ENCODE measurements at regions of chr4 and their contacts with region 1.

Region 1: GRCh38 chr4:139295206-139295941 is 5.9 kb upstream of the NAA15 start:
- DNase-seq: peak; percentile 90 to 96 (median 94)
- H3K4me3 ChIP-seq: peak overlapping the region; percentile 84 to 92
- H3K4me3 Mint-ChIP-seq: peak overlapping the region; percentile 86 to 99 (median 94)
- H3K27ac ChIP-seq: peak overlapping the region; percentile 86
- H3K27ac Mint-ChIP-seq: peak overlapping the region; percentile 93 to 99 (median 97)
- H3K4me1 ChIP-seq: peaks cover 40% of the 10 kb centered on the region
- H3K4me1 Mint-ChIP-seq: peaks cover 14 to 38% (median 25%) of the 10 kb centered on the region in 4 donors
- H3K27me3 ChIP-seq: no peaks in the 10 kb centered on the region
- H3K27me3 Mint-ChIP-seq: no peaks in the 10 kb centered on the region

Region 2: DNA sequence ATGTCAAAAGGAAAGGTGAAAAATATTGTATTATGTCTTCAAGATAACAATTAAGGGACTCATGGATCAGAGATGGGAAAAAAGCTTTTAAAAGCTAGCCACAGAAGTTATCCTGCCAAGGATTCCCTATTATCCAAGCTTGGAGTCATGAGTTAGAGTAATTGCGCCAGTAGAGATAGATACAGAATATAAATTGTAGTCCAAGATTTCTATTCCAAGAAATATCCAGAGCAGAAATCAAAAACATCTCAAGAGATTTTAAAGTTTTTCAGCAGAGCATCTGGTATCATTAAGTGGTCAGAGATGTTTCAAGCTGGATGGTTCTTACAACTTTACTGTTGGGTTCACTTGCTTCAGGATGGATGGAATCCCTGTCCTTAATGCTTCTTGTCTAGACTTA is 1949.8 kb before region 1 on chr4:
- CTCF ChIA-PET with region 1: no interaction called
- POLR2A ChIA-PET with region 1: no interaction called
- intact Hi-C with region 1: no loop called
- DNase-seq: no peak
- H3K4me3 ChIP-seq: no peak overlapping the region
- H3K4me3 Mint-ChIP-seq: no peak overlapping the region
- H3K27ac ChIP-seq: no peak overlapping the region
- H3K27ac Mint-ChIP-seq: no peak overlapping the region
- H3K4me1 ChIP-seq: no peaks in the 10 kb centered on the region
- H3K4me1 Mint-ChIP-seq: no peaks in the 10 kb centered on the region
- H3K27me3 ChIP-seq: no peaks in the 10 kb centered on the region
- H3K27me3 Mint-ChIP-seq: no peaks in the 10 kb centered on the region

Region 3: DNA sequence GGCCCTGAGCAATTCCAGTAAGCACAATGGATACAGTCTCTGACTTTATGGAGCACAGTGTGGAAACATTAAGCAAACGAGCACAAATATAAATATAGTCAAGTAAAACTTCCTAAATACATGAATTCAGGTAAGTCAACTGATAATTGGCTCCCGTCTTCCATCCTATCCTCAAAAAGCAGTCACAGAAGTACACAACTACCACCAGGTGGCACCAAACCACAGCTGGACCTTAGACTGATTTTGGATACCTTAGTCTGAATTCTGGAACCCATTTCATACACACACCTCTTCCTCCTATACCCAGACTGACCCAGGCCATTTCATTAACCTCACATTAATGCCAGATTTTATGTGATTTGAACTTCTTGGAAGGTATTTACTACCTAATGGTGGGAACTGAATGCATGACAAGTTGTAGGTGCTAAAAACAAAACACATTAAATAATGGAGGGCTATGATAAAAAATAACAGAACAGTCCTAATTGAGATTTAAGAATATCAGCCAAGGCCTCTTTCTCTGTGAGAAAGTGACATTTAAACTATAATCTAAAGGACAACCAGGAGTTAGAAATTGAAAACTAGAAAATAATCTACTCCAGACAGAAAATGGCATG is 195.9 kb before region 1 on chr4:
- CTCF ChIA-PET with region 1: interaction called, 76 read pairs
- POLR2A ChIA-PET with region 1: interaction called, 6 read pairs
- intact Hi-C with region 1: loop called (anchors 1 kb)
- DNase-seq: peak; percentile 70 to 78 (median 73)
- H3K4me3 ChIP-seq: no peak overlapping the region
- H3K4me3 Mint-ChIP-seq: no peak overlapping the region
- H3K27ac ChIP-seq: no peak overlapping the region
- H3K27ac Mint-ChIP-seq: peak overlapping the region in 1 of 7 donors; percentile 43
- H3K4me1 ChIP-seq: no peaks in the 10 kb centered on the region
- H3K4me1 Mint-ChIP-seq: peaks cover 0 to 6% (median 3%) of the 10 kb centered on the region in 4 donors
- H3K27me3 ChIP-seq: no peaks in the 10 kb centered on the region
- H3K27me3 Mint-ChIP-seq: no peaks in the 10 kb centered on the region

Region 4: DNA sequence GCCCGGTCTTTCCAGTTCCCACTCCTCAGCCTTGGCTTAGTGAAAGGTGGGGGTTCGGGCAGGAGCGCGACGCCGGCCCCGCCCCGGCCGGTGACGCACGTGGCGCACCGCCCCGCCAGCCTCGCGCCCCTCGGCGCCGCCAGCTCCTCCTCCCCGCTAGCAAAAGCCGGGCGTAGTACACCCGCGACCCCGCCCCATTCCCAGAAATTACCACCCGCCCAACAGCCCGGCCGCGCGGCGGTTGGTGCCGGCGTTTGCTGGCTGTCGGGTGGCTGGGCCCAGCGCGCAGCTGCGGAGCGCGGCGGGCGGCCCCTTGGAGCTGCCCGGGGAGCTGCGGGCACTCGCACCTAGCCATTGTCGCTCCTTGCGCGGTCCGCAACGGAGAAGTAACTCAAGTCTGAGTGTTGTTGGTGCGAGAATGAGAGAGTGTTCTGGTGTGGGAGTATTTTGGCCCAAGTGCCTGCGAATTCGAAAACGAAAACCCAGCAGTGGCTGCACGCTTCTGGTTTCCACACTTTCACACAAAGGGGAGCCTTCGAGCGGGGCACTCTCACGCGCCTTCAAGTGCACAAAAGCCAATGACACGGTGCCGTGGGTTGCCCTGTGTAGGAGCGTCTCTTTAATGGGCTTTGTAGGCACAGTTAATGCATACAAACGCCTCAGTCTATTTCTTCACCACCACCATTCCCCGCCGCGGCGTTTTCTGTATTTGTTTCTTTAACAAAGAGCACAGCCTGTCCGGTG is 117.3 kb before region 1 on chr4:
- CTCF ChIA-PET with region 1: interaction called, 6 read pairs
- POLR2A ChIA-PET with region 1: interaction called, 48 read pairs
- intact Hi-C with region 1: no loop called
- DNase-seq: peak; percentile 92 to 94 (median 92)
- H3K4me3 ChIP-seq: peak overlapping the region; percentile 88 to 89
- H3K4me3 Mint-ChIP-seq: peak overlapping the region; percentile 89 to 94 (median 92)
- H3K27ac ChIP-seq: peak overlapping the region; percentile 96
- H3K27ac Mint-ChIP-seq: peak overlapping the region; percentile 92 to 97 (median 96)
- H3K4me1 ChIP-seq: peaks cover 17% of the 10 kb centered on the region
- H3K4me1 Mint-ChIP-seq: peaks cover 14 to 29% (median 18%) of the 10 kb centered on the region in 4 donors
- H3K27me3 ChIP-seq: no peaks in the 10 kb centered on the region
- H3K27me3 Mint-ChIP-seq: no peaks in the 10 kb centered on the region

Region 5: DNA sequence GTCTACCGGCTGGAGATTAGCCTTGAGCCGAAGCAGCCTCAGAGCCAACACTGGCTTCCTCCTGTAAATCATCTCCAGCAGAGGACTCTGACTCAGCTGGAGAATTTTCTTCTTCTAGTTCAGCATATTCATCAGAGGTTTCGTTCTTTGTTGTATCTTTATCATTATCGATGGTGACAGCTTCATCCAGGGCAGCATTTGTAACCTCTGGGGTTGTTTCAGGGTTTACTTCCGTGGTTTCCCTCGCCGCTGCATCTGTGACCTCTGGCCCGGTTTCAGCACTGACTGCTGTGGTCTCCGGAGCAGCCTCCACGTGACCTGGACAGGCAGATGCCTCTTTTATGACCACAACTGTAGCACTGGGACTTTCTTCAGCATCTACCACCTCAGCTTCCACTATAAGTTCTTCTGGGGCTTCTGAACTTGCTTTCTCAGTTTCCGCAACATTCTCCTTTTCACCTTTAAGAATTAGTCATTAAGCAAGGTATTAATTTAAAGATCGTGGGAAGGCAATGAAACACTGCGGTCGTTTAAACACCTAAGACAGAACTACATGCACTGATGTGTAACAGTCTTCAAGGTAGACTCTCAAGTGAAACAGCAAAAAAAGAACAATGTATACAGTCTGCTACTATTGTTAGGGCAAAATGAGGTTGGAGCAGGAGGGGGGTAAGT is 28.7 kb before region 1 on chr4:
- CTCF ChIA-PET with region 1: interaction called, 30 read pairs
- POLR2A ChIA-PET with region 1: interaction called, 17 read pairs
- intact Hi-C with region 1: loop called (anchors 1 kb)
- DNase-seq: peak; percentile 61 to 86 (median 73)
- H3K4me3 ChIP-seq: peak overlapping the region; percentile 34 to 38
- H3K4me3 Mint-ChIP-seq: peak overlapping the region; percentile 79 to 91 (median 86)
- H3K27ac ChIP-seq: peak overlapping the region; percentile 47
- H3K27ac Mint-ChIP-seq: peak overlapping the region; percentile 74 to 94 (median 87)
- H3K4me1 ChIP-seq: peaks cover 19% of the 10 kb centered on the region
- H3K4me1 Mint-ChIP-seq: peaks cover 12 to 17% (median 15%) of the 10 kb centered on the region in 4 donors
- H3K27me3 ChIP-seq: no peaks in the 10 kb centered on the region
- H3K27me3 Mint-ChIP-seq: peaks cover 0 to 2% of the 10 kb centered on the region in 2 donors

Region 6: DNA sequence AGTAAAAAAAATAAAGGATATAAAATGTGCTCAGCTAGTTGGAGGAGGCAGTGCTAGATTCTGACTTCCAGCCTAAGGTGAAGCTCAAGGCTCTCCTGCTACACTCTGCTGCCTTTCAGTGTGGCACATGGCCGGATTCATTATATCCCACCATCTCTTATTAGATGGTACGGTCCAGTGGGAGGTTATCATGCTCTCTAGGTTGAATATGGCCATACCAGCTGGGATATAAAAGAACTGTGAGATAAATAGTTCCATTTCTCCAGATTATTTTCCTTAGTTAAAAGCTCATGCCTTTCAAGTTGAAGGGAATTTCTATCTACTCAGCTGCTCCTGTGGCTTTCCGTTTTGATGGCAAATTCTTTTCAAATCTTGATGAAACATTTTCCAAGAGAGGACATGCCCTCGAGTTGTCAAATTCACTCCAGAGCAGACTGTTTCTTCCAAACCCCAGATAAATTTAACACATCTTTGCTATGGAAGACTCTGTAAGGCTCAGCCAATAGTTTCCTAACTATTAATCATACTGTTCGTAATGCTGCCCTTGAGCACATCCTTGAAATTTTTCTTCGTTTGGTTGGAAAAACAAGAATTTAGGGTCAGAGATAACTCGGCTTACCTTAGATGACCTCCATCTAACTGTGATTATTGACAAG is 13.2 kb before region 1 on chr4:
- CTCF ChIA-PET with region 1: interaction called, 37 read pairs
- POLR2A ChIA-PET with region 1: interaction called, 4 read pairs
- intact Hi-C with region 1: no loop called
- DNase-seq: no peak
- H3K4me3 ChIP-seq: no peak overlapping the region
- H3K4me3 Mint-ChIP-seq: no peak overlapping the region
- H3K27ac ChIP-seq: no peak overlapping the region
- H3K27ac Mint-ChIP-seq: no peak overlapping the region
- H3K4me1 ChIP-seq: peaks cover 17% of the 10 kb centered on the region
- H3K4me1 Mint-ChIP-seq: peaks cover 7 to 19% (median 12%) of the 10 kb centered on the region in 4 donors
- H3K27me3 ChIP-seq: peaks cover 20% of the 10 kb centered on the region
- H3K27me3 Mint-ChIP-seq: peaks cover 22 to 27% of the 10 kb centered on the region in 2 donors

Region 7: GRCh38 chr4:139315221-139315675 is 19.9 kb after region 1 on chr4:
- CTCF ChIA-PET with region 1: interaction called, 25 read pairs
- POLR2A ChIA-PET with region 1: interaction called, 50 read pairs
- intact Hi-C with region 1: no loop called
- DNase-seq: no peak
- H3K4me3 ChIP-seq: peak overlapping the region in 1 of 2 donors; percentile 11
- H3K4me3 Mint-ChIP-seq: peak overlapping the region in 5 of 8 donors; percentile 34 to 75 (median 61)
- H3K27ac ChIP-seq: peak overlapping the region; percentile 54
- H3K27ac Mint-ChIP-seq: peak overlapping the region; percentile 64 to 95 (median 75)
- H3K4me1 ChIP-seq: peaks cover 70% of the 10 kb centered on the region
- H3K4me1 Mint-ChIP-seq: peaks cover 64 to 82% (median 73%) of the 10 kb centered on the region in 4 donors
- H3K27me3 ChIP-seq: no peaks in the 10 kb centered on the region
- H3K27me3 Mint-ChIP-seq: no peaks in the 10 kb centered on the region

Region 8: DNA sequence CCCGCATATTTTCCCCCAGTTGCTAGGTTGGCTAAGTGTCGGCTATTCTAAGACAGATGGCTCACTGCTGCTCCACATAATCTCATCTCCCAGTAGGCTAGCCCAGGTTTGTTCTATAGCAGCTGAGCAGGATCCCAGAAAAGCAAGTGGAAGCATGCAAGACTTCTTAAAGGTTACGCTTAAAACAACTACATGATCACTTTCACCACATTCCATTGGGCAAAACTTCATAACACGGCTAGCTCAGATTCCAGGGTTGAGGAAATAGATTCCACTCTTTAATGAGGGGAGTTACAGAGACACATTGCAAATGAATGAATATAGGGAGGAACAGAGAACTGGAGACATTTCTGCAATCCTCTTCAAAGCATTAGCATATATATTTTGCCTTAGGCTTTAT is 145.7 kb after region 1 on chr4:
- CTCF ChIA-PET with region 1: no interaction called
- POLR2A ChIA-PET with region 1: no interaction called
- intact Hi-C with region 1: no loop called
- DNase-seq: no peak
- H3K4me3 ChIP-seq: no peak overlapping the region
- H3K4me3 Mint-ChIP-seq: no peak overlapping the region
- H3K27ac ChIP-seq: no peak overlapping the region
- H3K27ac Mint-ChIP-seq: no peak overlapping the region
- H3K4me1 ChIP-seq: no peaks in the 10 kb centered on the region
- H3K4me1 Mint-ChIP-seq: no peaks in the 10 kb centered on the region
- H3K27me3 ChIP-seq: no peaks in the 10 kb centered on the region
- H3K27me3 Mint-ChIP-seq: no peaks in the 10 kb centered on the region

Region 9: GRCh38 chr4:139501927-139502899 is 206.8 kb after region 1 on chr4:
- CTCF ChIA-PET with region 1: no interaction called
- POLR2A ChIA-PET with region 1: no interaction called
- intact Hi-C with region 1: no loop called
- DNase-seq: peak in 1 of 5 donors; percentile 31
- H3K4me3 ChIP-seq: no peak overlapping the region
- H3K4me3 Mint-ChIP-seq: no peak overlapping the region
- H3K27ac ChIP-seq: no peak overlapping the region
- H3K27ac Mint-ChIP-seq: peak overlapping the region in 1 of 7 donors; percentile 43
- H3K4me1 ChIP-seq: no peaks in the 10 kb centered on the region
- H3K4me1 Mint-ChIP-seq: peaks cover 0 to 6% (median under 1%) of the 10 kb centered on the region in 4 donors
- H3K27me3 ChIP-seq: no peaks in the 10 kb centered on the region
- H3K27me3 Mint-ChIP-seq: no peaks in the 10 kb centered on the region

Region 10: DNA sequence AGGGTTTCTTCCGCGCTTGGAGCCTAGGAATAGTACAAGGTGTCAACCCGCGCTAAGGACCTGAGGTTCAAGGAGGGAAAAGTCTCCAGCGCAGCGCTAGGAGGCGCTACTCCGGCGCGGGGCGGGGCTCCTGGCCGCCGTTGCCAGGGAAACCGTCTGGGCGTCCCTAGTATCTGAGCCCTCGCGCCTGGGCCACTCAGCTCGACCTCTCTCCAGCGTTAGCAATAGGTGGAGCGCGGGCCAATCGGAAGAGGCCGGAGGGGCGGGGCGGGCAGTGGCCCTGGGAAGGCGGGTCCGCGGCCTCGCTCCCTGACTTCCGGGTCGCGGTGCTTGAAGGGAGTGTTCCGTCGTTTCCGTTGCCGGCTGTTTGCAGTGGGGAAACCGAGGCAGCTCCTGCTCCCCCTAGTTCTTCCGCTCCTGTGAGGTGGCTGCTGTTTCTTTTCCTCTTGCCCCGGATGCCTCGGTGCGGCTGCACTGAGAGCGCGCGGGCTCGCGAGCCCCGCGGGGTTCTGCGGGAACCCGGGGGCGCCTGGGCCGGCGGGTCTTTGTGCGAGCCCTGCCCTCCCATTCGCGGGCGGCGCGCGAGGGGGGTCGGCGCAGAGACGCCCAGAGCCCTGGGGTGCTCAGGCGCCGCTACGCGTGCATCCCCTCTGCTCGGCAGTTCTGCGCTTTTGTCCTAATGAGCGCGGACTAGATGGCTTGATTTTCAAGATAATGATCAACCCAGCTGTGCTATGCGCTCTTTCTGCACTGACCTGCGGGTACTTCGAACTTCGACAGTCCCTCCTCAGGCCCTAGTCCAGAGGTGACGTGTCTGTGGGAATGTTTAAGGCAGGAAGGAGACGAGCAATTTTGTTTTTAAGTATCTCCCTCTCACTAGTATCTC is 1228.7 kb after region 1 on chr4 and contains the start of gene ELMOD2:
- CTCF ChIA-PET with region 1: no interaction called
- POLR2A ChIA-PET with region 1: no interaction called
- intact Hi-C with region 1: loop called (anchors 5 kb)
- DNase-seq: peak; percentile 96 to 97 (median 97)
- H3K4me3 ChIP-seq: peak within 1 kb of the TSS; percentile 37 to 90
- H3K4me3 Mint-ChIP-seq: peak within 1 kb of the TSS; percentile 81 to 95 (median 85)
- H3K27ac ChIP-seq: peak within 1 kb of the TSS; percentile 67
- H3K27ac Mint-ChIP-seq: peak within 1 kb of the TSS; percentile 82 to 93 (median 88)
- H3K4me1 ChIP-seq: peaks cover 20% of the 10 kb centered on the region
- H3K4me1 Mint-ChIP-seq: peaks cover 12 to 26% (median 20%) of the 10 kb centered on the region in 4 donors
- H3K27me3 ChIP-seq: no peaks in the 10 kb centered on the region
- H3K27me3 Mint-ChIP-seq: no peaks in the 10 kb centered on the region
- total RNA-seq, gene ELMOD2: 26.2 to 29.8 TPM